PC-9 (cell line): ENCODE measurements at regions of chr3 and their contacts with region 1.

Region 1: GRCh38 chr3:20079621-20080020 is 39.4 kb downstream of the KAT2B start:
- DNase-seq: no peak
- H3K4me3 ChIP-seq: no peak overlapping the region
- H3K27ac ChIP-seq: no peak overlapping the region
- H3K4me1 ChIP-seq: no peaks in the 10 kb centered on the region
- H3K27me3 ChIP-seq: no peaks in the 10 kb centered on the region
- CTCF ChIP-seq: no peak

Region 2: DNA sequence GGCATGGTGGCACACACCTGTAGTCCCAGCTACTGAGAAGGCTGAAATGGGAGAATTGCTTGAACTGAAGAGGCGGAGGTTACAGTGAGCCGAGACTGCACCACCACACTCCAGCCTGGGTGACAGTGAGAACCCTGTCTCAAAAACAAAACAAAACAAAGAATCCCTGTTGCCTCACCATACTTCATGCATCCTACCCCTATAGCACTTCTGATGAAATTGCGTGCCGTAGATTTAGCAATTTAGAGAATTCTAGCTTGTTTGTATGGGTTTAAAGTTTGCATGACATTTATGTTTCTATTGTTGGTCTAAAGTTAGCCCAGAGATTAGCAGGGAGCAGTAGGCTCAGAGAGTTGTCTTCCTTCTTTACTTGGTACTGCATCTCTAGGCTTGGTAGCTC is 124.9 kb before region 1 on chr3:
- CTCF ChIA-PET with region 1: no interaction called
- POLR2A ChIA-PET with region 1: no interaction called
- intact Hi-C with region 1: no loop called
- DNase-seq: no peak
- H3K4me3 ChIP-seq: no peak overlapping the region
- H3K27ac ChIP-seq: no peak overlapping the region
- H3K4me1 ChIP-seq: peaks cover 8% of the 10 kb centered on the region
- H3K27me3 ChIP-seq: no peaks in the 10 kb centered on the region
- CTCF ChIP-seq: no peak

Region 3: DNA sequence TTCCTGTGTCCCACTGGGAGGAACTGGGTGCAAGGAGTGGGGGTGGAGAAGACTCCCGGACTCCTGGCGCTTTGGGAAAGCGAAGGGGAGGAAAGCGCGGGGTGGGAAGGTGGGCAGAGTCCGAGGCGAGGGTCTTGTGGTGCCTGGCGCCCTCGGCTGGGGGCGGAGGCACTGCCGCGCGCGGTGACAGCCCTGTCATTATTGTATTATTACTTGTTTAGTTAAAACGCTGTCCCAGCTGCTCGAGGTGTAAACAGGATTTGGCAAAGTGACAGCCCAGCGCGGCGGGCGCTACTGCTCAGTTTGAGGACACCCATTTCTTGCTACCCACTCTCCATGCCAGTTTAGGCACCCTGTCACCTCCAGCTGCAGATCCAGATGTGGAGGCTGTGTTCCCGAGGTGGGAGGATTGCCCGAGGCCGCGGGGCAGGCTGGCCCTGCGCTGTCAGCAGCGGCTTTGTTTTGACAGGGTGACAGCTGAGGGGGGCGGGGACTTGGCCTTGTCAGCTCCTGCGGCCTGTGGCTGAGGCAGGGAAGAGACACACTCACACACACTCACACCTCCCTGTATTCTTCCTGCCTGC is 38.3 kb before region 1 on chr3:
- CTCF ChIA-PET with region 1: no interaction called
- POLR2A ChIA-PET with region 1: no interaction called
- intact Hi-C with region 1: no loop called
- DNase-seq: peak in 1 of 2 experiments; percentile 62
- H3K4me3 ChIP-seq: peak overlapping the region; percentile 62
- H3K27ac ChIP-seq: no peak overlapping the region
- H3K4me1 ChIP-seq: peaks cover 27% of the 10 kb centered on the region
- H3K27me3 ChIP-seq: no peaks in the 10 kb centered on the region
- CTCF ChIP-seq: no peak

Region 4: GRCh38 chr3:20054549-20054987 is 25.1 kb before region 1 on chr3:
- CTCF ChIA-PET with region 1: interaction called, 10 read pairs
- POLR2A ChIA-PET with region 1: no interaction called
- intact Hi-C with region 1: no loop called
- DNase-seq: peak; percentile 83 to 96
- H3K4me3 ChIP-seq: no peak overlapping the region
- H3K27ac ChIP-seq: 0 out of 2 replicates have a peak overlapping the region, but pooled peaks have one; percentile 7
- H3K4me1 ChIP-seq: peaks cover 45% of the 10 kb centered on the region
- H3K27me3 ChIP-seq: no peaks in the 10 kb centered on the region
- CTCF ChIP-seq: no peak

Region 5: GRCh38 chr3:20785618-20786017 is 706.0 kb after region 1 on chr3:
- CTCF ChIA-PET with region 1: no interaction called
- POLR2A ChIA-PET with region 1: no interaction called
- intact Hi-C with region 1: no loop called
- DNase-seq: no peak
- H3K4me3 ChIP-seq: no peak overlapping the region
- H3K27ac ChIP-seq: no peak overlapping the region
- H3K4me1 ChIP-seq: no peaks in the 10 kb centered on the region
- H3K27me3 ChIP-seq: no peaks in the 10 kb centered on the region
- CTCF ChIP-seq: no peak